ENCODE measurements at regions of chr14 and their contacts with region 1.

Region 1: DNA sequence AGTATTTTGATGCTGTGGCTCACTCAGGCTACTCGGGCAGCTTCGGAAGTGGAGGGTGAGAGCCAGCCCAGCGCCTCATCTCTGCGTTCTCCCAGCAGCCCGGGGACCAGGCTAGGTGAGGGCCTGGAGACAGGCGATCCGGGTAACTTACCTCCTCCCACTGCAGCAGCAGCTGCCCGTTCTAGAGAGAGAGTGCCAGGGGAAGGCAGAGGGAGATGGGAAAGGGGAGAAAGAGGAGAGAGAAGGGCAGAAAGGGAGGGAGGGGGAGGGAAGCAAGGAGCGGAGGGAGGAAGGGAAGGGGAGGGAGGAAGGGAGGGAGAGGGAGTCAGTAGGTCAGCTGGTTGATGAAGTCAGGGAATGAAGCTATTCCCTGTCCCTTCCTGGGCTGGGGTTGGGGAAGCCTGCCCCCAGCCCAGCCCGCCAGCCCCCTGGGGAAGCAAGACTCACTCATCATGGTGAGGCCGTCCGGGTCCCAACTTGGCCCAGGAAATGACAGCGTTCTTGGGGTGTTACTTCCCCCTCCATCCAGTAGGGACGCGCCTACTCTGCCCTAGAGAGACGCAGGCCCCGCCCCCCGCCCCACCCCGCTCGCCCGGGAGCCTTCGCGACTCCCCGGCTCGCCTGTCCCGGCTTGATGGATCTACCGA is at the start of gene IFI27L2:
- DNase-seq: peak; percentile 27 to 84 (median 51)
- ATAC-seq: peak; percentile 93
- H3K4me3 ChIP-seq: peak within 1 kb of the TSS; percentile 73
- H3K4me3 Mint-ChIP-seq: peak within 1 kb of the TSS; percentile 88
- H3K27ac ChIP-seq: peak within 1 kb of the TSS in 1 of 2 donors; percentile 19
- H3K27ac Mint-ChIP-seq: peak within 1 kb of the TSS; percentile 45
- H3K4me1 ChIP-seq: peaks cover 18% of the 10 kb centered on the region
- H3K4me1 Mint-ChIP-seq: peaks cover 20% of the 10 kb centered on the region
- H3K27me3 ChIP-seq: no peaks in the 10 kb centered on the region
- H3K27me3 Mint-ChIP-seq: no peaks in the 10 kb centered on the region
- CTCF ChIP-seq: peak; percentile 41
- total RNA-seq, gene IFI27L2: 21.5 to 22.2 TPM

Region 2: DNA sequence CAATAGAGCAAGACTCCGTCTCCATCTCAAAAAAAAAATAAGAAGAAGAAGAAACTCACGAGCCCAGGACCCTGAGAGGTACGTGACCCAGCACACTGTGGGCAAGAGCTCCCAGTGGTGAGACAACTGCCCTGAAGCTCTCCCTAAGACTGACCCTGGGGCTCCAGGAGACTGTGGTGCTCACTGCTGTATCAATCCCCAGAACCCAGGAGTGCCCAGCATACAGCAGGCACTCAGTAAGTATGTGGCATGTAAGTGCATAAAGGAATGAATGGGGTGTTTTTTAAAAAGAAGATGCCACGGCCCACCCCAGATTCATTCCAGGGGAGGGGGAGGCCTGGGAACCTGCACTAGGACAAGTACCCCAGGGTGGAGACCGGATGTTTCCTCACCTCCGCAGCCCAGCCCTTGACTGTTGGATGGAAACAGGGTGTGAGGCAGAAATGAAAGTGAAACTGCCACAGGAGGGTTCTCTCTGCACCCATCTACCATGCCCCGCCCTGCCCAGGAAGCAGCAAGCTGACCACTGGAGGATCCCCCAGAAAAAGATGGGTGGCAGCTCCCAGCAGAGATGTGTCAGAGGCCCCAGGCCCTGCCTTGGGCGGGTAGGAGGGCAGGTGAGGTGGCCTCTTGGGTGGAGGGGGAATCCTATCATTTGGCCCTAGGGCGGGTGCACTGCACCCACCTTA is 1025.7 kb before region 1 on chr14:
- CTCF ChIA-PET with region 1: no interaction called
- POLR2A ChIA-PET with region 1: no interaction called
- intact Hi-C with region 1: no loop called
- DNase-seq: peak; percentile 26 to 92 (median 56)
- ATAC-seq: peak; percentile 93
- H3K4me3 ChIP-seq: peak overlapping the region; percentile 52
- H3K4me3 Mint-ChIP-seq: peak overlapping the region; percentile 87
- H3K27ac ChIP-seq: peak overlapping the region; percentile 24 to 70
- H3K27ac Mint-ChIP-seq: peak overlapping the region; percentile 94
- H3K4me1 ChIP-seq: peaks cover 40% of the 10 kb centered on the region
- H3K4me1 Mint-ChIP-seq: peaks cover 21% of the 10 kb centered on the region
- H3K27me3 ChIP-seq: no peaks in the 10 kb centered on the region
- H3K27me3 Mint-ChIP-seq: no peaks in the 10 kb centered on the region
- CTCF ChIP-seq: no peak

Region 3: DNA sequence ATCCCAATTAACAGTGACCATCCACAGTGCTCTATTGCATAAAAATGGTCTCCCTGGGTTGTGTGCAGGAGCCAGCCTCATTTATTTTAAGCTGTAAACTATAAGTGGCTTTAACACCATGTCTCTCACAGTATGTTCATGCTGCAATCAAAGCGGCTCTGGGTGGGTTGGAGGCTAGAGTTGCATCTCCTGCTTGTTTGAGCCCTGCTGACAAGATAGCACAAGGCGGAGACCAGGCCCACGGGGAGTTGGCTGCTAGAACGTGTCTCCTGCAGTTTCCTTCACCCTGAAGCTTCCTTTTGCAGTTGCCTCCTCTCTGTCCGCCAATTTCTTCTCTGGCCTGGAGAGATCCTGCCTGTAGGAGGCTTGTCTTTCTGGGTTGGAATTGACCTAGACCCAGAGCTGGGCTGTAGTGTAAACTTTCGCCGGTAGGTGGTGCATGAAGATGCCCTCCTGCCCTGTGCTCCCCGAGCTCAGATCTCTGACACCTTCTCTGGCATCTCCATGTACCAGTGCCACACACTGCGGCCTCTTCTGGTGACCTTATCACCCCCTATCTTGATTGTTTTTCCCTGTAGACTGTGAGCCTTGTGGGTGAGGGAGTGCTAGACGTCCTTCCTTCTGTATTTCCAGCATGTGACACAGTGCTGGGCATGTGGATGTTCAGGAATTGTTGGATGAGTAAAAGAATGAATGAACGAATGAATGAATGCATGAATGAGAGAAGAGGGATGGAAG is 92.8 kb before region 1 on chr14:
- CTCF ChIA-PET with region 1: interaction called, 16 read pairs
- POLR2A ChIA-PET with region 1: interaction called, 3 read pairs
- intact Hi-C with region 1: no loop called
- DNase-seq: peak; percentile 60 to 86 (median 70)
- ATAC-seq: peak; percentile 97
- H3K4me3 ChIP-seq: no peak overlapping the region
- H3K4me3 Mint-ChIP-seq: no peak overlapping the region
- H3K27ac ChIP-seq: no peak overlapping the region
- H3K27ac Mint-ChIP-seq: no peak overlapping the region
- H3K4me1 ChIP-seq: peaks cover 4% of the 10 kb centered on the region
- H3K4me1 Mint-ChIP-seq: peaks cover 4% of the 10 kb centered on the region
- H3K27me3 ChIP-seq: no peaks in the 10 kb centered on the region
- H3K27me3 Mint-ChIP-seq: no peaks in the 10 kb centered on the region
- CTCF ChIP-seq: peak; percentile 86

Measured in CD4-positive, alpha-beta T cell (primary cell).